ENCODE measurements at regions of chr1 and their contacts with region 1.

Region 1: GRCh38 chr1:222455188-222455879 is 92.6 kb downstream of the HHIPL2 start:
- DNase-seq: peak; percentile 83
- H3K4me3 ChIP-seq: no peak overlapping the region
- H3K27ac ChIP-seq: peak overlapping the region in 1 of 4 donors; percentile 42
- H3K4me1 ChIP-seq: peaks cover 0 to 8% (median 5%) of the 10 kb centered on the region in 4 donors
- H3K27me3 ChIP-seq: no peaks in the 10 kb centered on the region
- CTCF ChIP-seq: peak; percentile 78 to 93 (median 87)
- EP300 ChIP-seq: no peak
- POLR2A ChIP-seq: no peak

Region 2: GRCh38 chr1:222105393-222105737 is 350.0 kb before region 1 on chr1:
- in situ Hi-C with region 1: loop called in 2 of 4 experiments (anchors 10 to 25 kb)
- intact Hi-C with region 1: no loop called
- DNase-seq: peak; percentile 14
- H3K4me3 ChIP-seq: no peak overlapping the region
- H3K27ac ChIP-seq: no peak overlapping the region
- H3K4me1 ChIP-seq: peaks cover 0 to 6% (median 0%) of the 10 kb centered on the region in 4 donors
- H3K27me3 ChIP-seq: no peaks in the 10 kb centered on the region
- CTCF ChIP-seq: no peak
- EP300 ChIP-seq: no peak
- POLR2A ChIP-seq: no peak

Measured in transverse colon (tissue), 4 donors.